ENCODE measurements at regions of chr17 and their contacts with region 1.

Region 1: GRCh38 chr17:32275060-32276042 is 9.7 kb downstream of the RHBDL3 start:
- DNase-seq: no peak
- ATAC-seq: peak; percentile 81
- H3K4me3 ChIP-seq: no peak overlapping the region
- H3K27ac ChIP-seq: no peak overlapping the region
- H3K4me1 ChIP-seq: peaks cover 9% of the 10 kb centered on the region; the same call in 1 of the 2 replicates
- H3K27me3 ChIP-seq: no peaks in the 10 kb centered on the region
- CTCF ChIP-seq: no peak

Region 2: DNA sequence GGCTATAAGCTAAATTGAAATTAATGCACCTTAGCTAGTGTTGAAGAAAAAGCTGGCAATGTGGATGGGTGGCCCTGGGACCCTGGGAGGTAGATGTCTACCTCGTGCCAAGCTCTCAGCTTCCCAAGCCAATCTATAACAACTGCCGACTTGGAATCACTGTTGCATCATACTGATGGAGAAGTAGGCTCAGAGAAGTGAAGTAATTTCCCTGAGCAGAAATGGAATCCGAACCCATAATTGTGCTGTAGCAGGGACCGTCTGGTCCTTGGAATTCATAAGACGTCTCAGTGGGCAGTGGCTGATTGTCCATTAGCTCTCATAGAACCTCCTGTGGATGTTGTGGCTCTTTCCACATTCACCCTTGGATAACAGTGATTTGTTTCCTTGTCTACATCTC is 687.3 kb before region 1 on chr17:
- CTCF ChIA-PET with region 1: no interaction called
- POLR2A ChIA-PET with region 1: interaction called, 17 read pairs
- in situ Hi-C with region 1: no loop called
- intact Hi-C with region 1: no loop called
- DNase-seq: no peak
- ATAC-seq: no peak
- H3K4me3 ChIP-seq: no peak overlapping the region
- H3K27ac ChIP-seq: peak overlapping the region; percentile 25; the same call in 1 of the 2 replicates
- H3K4me1 ChIP-seq: peaks cover 3% of the 10 kb centered on the region; the same call in 1 of the 2 replicates
- H3K27me3 ChIP-seq: no peaks in the 10 kb centered on the region
- CTCF ChIP-seq: no peak

Measured in Panc1 (cell line).